ENCODE measurements at regions of chr3 and their contacts with region 1.

Region 1: GRCh38 chr3:128969993-128970739 is 23.7 kb downstream of the CFAP92 start:
- DNase-seq: peak; percentile 69
- ATAC-seq: peak; percentile 81
- H3K4me3 Mint-ChIP-seq: no peak overlapping the region
- H3K27ac Mint-ChIP-seq: no peak overlapping the region
- H3K4me1 Mint-ChIP-seq: no peaks in the 10 kb centered on the region
- H3K27me3 Mint-ChIP-seq: no peaks in the 10 kb centered on the region
- CTCF ChIP-seq: peak; percentile 71

Region 2: DNA sequence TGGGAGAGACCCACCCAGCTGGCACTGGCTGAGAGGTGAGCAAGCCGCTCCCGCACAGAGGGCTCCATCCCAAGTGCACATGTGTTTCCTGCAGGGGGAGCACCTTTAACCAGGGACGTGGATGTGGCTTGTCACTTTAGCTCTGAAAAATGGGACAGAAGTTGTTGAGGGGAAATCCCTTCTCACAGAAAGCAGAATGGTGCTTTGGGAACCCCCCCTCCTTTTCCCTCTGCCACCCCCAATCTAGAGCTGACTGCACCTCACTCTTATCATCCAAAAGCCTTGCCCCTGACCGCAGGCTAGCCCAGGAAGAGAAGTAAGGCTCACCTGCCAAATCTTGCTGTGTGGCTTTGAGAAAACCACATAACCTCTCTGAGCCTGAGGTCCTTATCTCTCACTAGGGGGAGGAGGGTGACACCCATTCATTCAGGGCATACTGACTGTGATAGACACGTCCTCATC is 397.5 kb before region 1 on chr3:
- CTCF ChIA-PET with region 1: no interaction called
- POLR2A ChIA-PET with region 1: no interaction called
- DNase-seq: peak; percentile 59
- ATAC-seq: peak; percentile 69
- H3K4me3 Mint-ChIP-seq: no peak overlapping the region
- H3K27ac Mint-ChIP-seq: no peak overlapping the region
- H3K4me1 Mint-ChIP-seq: peaks cover 19% of the 10 kb centered on the region
- H3K27me3 Mint-ChIP-seq: no peaks in the 10 kb centered on the region; the same call in none of the 2 replicates
- CTCF ChIP-seq: peak; percentile 20; the same call in 1 of the 2 replicates

Region 3: DNA sequence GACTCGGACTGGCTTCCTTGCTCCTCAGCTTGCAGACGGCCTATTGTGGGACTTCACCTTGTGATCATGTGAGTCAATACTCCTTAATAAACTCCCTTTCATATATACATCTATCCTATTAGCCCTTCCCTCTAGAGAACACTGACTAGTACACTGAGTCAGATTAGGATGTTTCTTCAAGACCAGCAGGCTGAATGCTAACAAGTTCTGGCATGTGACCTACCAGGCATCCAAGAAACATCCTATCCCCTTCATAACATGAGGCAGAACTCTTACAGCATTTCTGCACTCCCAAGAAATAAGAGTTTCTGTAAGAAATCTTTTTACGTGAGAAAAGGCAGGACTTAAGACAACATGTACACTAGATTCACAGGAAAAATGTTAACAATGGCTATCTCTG is 14.4 kb after region 1 on chr3:
- CTCF ChIA-PET with region 1: interaction called, 38 read pairs
- POLR2A ChIA-PET with region 1: no interaction called
- DNase-seq: no peak
- ATAC-seq: no peak
- H3K4me3 Mint-ChIP-seq: no peak overlapping the region
- H3K27ac Mint-ChIP-seq: no peak overlapping the region
- H3K4me1 Mint-ChIP-seq: peaks cover 7% of the 10 kb centered on the region
- H3K27me3 Mint-ChIP-seq: peaks cover 2% of the 10 kb centered on the region; the same call in 1 of the 2 replicates
- CTCF ChIP-seq: no peak

Region 4: GRCh38 chr3:129016356-129016719 is 46.2 kb after region 1 on chr3:
- CTCF ChIA-PET with region 1: interaction called, 38 read pairs
- POLR2A ChIA-PET with region 1: no interaction called
- DNase-seq: no peak
- ATAC-seq: peak; percentile 49
- H3K4me3 Mint-ChIP-seq: no peak overlapping the region
- H3K27ac Mint-ChIP-seq: no peak overlapping the region
- H3K4me1 Mint-ChIP-seq: peaks cover 7% of the 10 kb centered on the region
- H3K27me3 Mint-ChIP-seq: no peaks in the 10 kb centered on the region; the same call in 1 of the 2 replicates
- CTCF ChIP-seq: no peak

Region 5: GRCh38 chr3:129045675-129046036 is 75.5 kb after region 1 on chr3:
- CTCF ChIA-PET with region 1: interaction called, 70 read pairs
- POLR2A ChIA-PET with region 1: interaction called, 5 read pairs
- DNase-seq: peak; percentile 71
- ATAC-seq: peak; percentile 74
- H3K4me3 Mint-ChIP-seq: peak overlapping the region; percentile 52
- H3K27ac Mint-ChIP-seq: no peak overlapping the region
- H3K4me1 Mint-ChIP-seq: peaks cover 14% of the 10 kb centered on the region
- H3K27me3 Mint-ChIP-seq: peaks cover 46% of the 10 kb centered on the region
- CTCF ChIP-seq: no peak

Region 6: DNA sequence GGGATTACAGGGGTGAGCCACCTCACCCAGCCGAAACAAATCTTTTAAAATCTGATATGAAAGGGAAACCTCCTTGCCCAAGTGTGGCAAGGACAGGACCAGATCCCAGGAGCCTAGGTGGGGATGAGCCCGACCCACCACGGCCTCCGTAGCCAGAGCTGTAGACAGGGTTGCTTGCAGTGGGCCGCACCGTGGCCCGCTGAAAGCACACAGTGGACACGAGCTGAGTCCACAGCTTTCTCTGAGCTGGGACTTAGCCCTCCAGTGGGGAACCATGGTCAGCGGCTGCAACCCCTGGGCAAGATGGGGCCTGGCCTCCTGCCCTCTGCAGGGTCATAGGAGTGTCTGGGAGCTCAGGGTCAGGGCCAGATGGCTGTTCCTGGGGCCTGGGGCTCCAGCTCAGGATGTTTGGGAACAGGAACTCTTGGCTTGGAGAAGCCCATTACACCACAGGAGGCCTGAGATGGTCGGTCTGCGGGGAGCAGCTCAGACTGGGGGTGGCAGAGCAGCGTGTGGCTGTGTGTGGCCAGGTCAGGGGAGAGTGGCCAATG is 115.1 kb after region 1 on chr3:
- CTCF ChIA-PET with region 1: interaction called, 12 read pairs
- POLR2A ChIA-PET with region 1: no interaction called
- DNase-seq: no peak
- ATAC-seq: no peak
- H3K4me3 Mint-ChIP-seq: no peak overlapping the region
- H3K27ac Mint-ChIP-seq: no peak overlapping the region
- H3K4me1 Mint-ChIP-seq: no peaks in the 10 kb centered on the region
- H3K27me3 Mint-ChIP-seq: peaks cover 8% of the 10 kb centered on the region
- CTCF ChIP-seq: no peak

Region 7: GRCh38 chr3:129160891-129161859 is 191.0 kb after region 1 on chr3 and contains the start of gene ISY1:
- CTCF ChIA-PET with region 1: interaction called, 37 read pairs
- POLR2A ChIA-PET with region 1: no interaction called
- DNase-seq: peak; percentile 86
- ATAC-seq: peak; percentile 72
- H3K4me3 Mint-ChIP-seq: peak within 1 kb of the TSS; percentile 98
- H3K27ac Mint-ChIP-seq: peak within 1 kb of the TSS; percentile 100
- H3K4me1 Mint-ChIP-seq: peaks cover 13% of the 10 kb centered on the region
- H3K27me3 Mint-ChIP-seq: no peaks in the 10 kb centered on the region
- CTCF ChIP-seq: peak; percentile 65
- total RNA-seq, gene ISY1: 21.4 to 25.0 TPM (median 21.5 TPM) in 3 replicates

Region 8: GRCh38 chr3:129289201-129289921 is 319.2 kb after region 1 on chr3:
- CTCF ChIA-PET with region 1: no interaction called
- POLR2A ChIA-PET with region 1: no interaction called
- DNase-seq: no peak
- ATAC-seq: no peak
- H3K4me3 Mint-ChIP-seq: no peak overlapping the region
- H3K27ac Mint-ChIP-seq: no peak overlapping the region
- H3K4me1 Mint-ChIP-seq: no peaks in the 10 kb centered on the region
- H3K27me3 Mint-ChIP-seq: no peaks in the 10 kb centered on the region
- CTCF ChIP-seq: no peak

Region 9: DNA sequence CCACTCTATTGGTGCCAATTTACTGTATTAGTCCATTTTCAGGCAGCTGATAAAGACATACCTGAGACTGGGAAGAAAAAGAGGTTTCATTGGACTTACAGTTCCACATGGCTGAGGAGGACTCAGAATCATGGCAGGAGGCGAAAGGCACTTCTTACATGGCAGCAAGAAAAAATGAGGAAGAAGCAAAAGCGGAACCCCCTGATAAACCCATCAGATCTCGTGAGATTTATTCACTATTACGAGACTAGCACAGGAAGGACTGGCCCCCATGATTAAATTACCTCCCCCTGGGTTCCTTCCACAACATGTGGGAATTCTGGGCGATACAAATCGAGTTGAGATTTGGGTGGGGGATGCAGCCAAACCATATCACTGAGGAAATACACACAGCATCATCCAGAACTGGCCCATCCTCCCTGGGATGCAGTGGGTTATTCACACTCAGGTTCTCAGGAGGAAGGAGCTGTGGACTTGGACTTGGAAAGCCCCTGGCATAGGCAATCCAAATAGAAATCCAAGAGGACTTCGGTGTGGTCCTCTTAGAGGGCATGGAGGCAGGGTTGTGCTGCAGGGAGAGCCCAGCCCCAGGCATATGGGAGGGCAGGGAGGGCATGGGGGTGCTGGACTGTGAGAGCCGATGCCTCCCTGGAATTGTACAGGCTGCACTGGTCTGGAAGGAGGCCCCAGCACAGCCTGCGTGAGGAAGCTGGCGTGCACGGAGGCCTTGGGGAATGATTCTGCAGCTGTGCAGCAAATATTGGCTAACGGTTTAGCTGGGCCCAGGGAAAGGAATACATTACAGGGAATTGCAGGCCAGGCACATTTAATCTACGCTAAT is 395.4 kb after region 1 on chr3:
- CTCF ChIA-PET with region 1: no interaction called
- POLR2A ChIA-PET with region 1: no interaction called
- DNase-seq: no peak
- ATAC-seq: no peak
- H3K4me3 Mint-ChIP-seq: no peak overlapping the region
- H3K27ac Mint-ChIP-seq: 0 out of 2 replicates have a peak overlapping the region, but pooled peaks have one; percentile 24
- H3K4me1 Mint-ChIP-seq: no peaks in the 10 kb centered on the region
- H3K27me3 Mint-ChIP-seq: peaks cover 5% of the 10 kb centered on the region; the same call in 1 of the 2 replicates
- CTCF ChIP-seq: no peak